Calu3 (cell line): ENCODE measurements at regions of chr5 and their contacts with region 1.

Region 1: DNA sequence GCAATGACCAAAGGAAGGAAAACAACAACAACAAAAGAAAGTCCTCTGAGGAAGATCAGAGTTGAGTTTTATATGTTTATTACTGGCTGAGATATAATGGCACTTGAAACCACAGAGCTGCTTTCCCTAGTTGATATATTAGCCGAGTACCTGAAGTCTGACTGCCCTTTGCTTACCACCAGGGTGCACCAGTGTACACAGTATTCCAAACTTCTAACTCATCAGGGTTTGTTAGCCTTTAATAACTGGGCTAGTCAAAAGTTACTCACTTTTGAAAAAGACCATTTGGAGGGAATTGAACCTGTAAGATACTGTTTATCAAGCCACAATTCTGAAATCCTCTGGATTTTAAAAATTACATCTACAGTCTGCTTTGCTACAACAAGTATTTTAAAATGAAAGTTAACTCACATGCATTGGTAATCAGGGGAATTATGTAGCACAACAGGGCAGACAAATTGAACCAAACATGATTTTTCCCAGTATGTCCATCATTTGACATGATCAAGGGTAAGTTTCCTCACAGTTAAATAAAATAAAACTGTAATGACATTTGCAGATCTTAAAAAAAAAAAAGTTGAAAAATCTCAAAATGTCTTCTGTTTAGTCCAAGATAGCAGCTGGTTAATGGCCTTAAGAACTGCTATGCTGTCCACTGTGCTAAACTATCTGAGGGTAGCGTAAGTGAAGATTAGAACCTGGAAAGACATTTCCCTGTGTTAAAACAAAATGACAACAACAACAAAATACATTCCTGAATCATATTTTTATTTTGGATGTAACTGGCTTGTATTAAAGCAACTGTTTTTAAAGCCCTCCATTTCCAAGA is 57.3 kb upstream of the C6 start:
- DNase-seq: peak; percentile 51
- H3K4me3 Mint-ChIP-seq: no peak overlapping the region
- H3K27ac Mint-ChIP-seq: no peak overlapping the region
- H3K4me1 Mint-ChIP-seq: peaks cover 8% of the 10 kb centered on the region
- H3K27me3 Mint-ChIP-seq: peaks cover 13% of the 10 kb centered on the region
- CTCF ChIP-seq: peak; percentile 52

Region 2: DNA sequence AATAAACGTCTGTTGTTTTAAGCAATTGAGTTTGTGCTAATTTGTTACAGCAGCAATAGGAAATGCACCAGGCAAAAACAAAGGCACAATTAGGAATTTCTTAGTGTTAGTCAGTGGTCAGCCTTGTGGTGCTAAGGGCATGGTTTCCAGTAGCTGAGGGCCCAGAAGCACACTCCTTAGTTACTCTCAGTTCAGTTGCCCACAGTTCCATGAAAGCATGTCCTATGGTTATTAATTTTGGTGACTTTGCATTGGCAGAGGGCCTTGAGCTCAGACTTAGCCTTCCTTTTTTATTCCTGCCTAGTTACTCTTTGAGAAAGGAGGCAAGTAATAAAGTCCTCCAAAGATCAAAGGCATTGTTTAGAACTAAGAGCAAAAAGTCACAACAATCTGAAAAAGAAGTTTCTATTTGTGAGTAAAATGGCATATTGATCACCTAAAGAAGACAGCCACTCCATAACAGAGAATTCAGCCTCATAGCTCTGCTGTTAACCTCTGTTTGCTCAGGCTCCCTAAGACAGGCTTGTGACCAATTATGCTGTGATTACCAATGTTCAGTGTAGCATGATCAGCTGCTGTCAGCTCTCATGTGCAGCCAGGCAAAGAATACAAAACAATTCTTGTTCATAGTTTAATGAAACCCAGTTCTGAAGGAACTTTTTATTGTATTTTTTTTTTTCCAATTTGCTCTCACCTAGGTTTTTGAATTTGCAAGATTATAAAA is 142.5 kb before region 1 on chr5:
- CTCF ChIA-PET with region 1: no interaction called
- intact Hi-C with region 1: no loop called
- DNase-seq: no peak
- H3K4me3 Mint-ChIP-seq: no peak overlapping the region
- H3K27ac Mint-ChIP-seq: no peak overlapping the region
- H3K4me1 Mint-ChIP-seq: no peaks in the 10 kb centered on the region
- H3K27me3 Mint-ChIP-seq: no peaks in the 10 kb centered on the region
- CTCF ChIP-seq: no peak

Region 3: DNA sequence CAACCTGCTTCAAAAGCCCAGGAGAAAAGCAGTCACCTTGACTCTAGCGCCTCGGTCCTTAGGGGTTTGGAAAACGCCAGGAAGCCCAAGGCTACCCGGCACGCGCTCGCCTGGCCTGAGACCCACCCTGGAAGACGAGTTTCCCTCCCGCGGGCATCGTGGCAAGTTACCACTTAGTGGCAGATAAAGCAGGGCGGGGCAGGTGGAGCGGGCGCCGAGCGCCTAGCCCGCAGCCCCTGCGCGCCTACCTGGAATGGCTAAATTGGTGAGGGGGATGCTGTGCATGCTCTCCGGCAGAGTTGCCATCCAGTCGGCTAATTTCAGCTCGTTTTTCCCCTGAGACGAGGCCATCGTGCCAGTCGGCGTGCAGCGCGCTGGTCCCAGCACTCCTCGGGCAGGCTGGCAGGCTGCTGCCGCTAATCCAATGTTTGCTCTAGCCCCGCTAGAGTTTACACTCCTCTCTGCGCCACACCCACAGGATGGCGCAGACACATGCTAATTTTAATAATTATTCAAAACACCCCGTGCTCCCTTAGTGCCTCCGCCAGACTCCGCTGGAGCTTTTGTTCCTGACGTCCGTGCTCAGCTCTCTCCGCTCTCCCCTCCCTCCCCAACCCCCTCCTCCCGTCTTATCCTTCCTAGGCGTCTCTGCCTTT is 239.7 kb after region 1 on chr5 and contains the start of gene PLCXD3:
- CTCF ChIA-PET with region 1: no interaction called
- intact Hi-C with region 1: loop called (anchors 10 kb)
- DNase-seq: peak; percentile 34
- H3K4me3 Mint-ChIP-seq: peak within 1 kb of the TSS; percentile 54
- H3K27ac Mint-ChIP-seq: no peak within 1 kb of the TSS
- H3K4me1 Mint-ChIP-seq: peaks cover 8% of the 10 kb centered on the region
- H3K27me3 Mint-ChIP-seq: peaks cover 31% of the 10 kb centered on the region
- CTCF ChIP-seq: no peak
- total RNA-seq, gene PLCXD3: not detected in 2 replicates

Region 4: DNA sequence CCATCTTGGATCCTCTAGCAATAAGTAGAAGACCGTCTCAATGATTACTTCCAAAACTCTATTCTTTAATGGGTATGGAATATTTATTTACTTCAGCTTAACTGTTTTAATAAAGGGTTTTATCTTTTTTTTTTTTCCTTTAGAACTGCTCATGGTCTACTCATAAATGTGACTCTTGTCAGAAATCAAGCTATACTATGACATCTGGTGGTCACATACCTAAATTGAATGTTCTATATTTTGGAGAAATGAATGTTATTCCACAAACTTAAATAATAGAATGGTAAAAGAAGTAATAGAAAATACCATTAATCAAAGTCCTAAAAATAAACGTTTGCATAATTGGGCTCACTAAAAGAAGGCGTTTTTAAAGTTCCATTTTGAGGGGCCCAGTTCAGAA is 371.0 kb after region 1 on chr5:
- CTCF ChIA-PET with region 1: no interaction called
- intact Hi-C with region 1: loop called (anchors 10 kb)
- DNase-seq: no peak
- H3K4me3 Mint-ChIP-seq: no peak overlapping the region
- H3K27ac Mint-ChIP-seq: no peak overlapping the region
- H3K4me1 Mint-ChIP-seq: no peaks in the 10 kb centered on the region
- H3K27me3 Mint-ChIP-seq: no peaks in the 10 kb centered on the region
- CTCF ChIP-seq: no peak